GM13976 (cell line): ENCODE measurements at regions of chr5 and their contacts with region 1.

Region 1: GRCh38 chr5:88883059-88883835 is at the start of gene MEF2C:
- DNase-seq: peak; percentile 67
- CTCF ChIP-seq: no peak

Region 2: DNA sequence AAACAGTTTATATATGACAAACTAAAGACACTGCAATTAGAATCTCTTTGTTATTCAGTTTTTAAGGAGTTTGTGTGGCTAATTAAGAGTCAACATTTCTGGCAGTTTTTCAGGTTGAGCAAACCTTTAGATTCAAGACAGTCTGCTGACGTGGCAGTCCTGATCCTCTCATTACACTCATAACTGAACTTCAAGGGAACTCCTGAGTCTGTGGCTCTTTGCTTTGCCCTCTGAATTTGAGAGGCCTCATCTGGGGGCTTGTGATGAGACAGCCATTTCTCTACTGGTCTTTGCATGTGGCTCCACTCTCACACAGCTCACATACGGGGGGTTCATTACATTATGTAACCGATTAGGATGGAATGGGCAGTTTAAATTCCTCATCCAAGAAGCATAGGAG is 182.7 kb after region 1 on chr5:
- in situ Hi-C with region 1: loop called (anchors 10 kb)
- DNase-seq: peak; percentile 27
- CTCF ChIP-seq: no peak

Region 3: DNA sequence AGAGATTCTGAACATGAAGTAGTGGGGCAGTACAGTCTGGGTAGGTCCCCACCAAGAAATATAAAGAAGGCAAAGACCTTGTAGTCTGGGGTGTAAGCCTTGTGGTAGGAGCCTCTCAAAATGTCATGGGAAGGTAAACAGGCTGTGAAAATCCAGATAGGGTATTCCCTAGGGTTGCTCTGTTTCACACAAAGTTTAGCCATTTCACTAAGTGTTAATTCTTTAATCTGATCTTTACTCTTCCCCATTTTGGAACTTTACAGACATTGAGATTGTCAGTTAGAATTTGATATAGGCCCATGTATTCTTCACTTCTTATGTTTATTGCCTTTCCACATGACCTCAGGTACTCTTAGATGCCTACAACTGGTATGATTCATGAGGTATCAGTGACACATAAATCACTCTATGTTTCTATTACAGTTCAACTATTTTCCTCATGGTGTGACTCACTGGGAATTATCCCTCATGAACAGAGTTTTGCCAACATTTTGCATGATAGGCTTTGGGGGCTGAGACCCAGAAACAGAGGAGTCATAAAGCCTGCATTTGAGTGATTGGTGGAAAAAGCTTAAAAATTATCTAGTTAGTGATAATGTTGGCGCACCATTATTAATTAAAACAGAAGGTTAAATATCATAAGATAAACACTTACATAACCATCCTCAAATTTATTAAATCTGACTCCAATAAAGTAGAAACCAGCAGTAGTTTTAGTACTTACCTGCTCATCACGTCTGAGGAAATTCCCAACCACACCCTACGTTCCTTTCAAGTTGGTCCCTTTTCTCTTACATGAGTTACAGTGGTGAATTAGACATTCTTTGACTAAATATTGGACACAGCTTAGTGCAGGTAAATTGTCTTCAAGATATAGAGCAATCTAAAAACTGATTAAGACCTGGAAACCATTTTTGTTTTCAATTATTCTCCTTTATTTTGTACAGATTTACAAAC is 399.6 kb after region 1 on chr5:
- in situ Hi-C with region 1: loop called (anchors 25 kb)
- DNase-seq: no peak
- CTCF ChIP-seq: no peak

Region 4: GRCh38 chr5:89435347-89435746 is 552.1 kb after region 1 on chr5:
- in situ Hi-C with region 1: loop called (anchors 5 kb)
- DNase-seq: peak; percentile 4
- CTCF ChIP-seq: no peak

Region 5: GRCh38 chr5:89729623-89730301 is 846.5 kb after region 1 on chr5:
- in situ Hi-C with region 1: loop called (anchors 25 kb)
- DNase-seq: no peak
- CTCF ChIP-seq: peak; percentile 6